Breast epithelium (tissue), 4 donors: ENCODE measurements at regions of chr3 and their contacts with region 1.

Region 1: DNA sequence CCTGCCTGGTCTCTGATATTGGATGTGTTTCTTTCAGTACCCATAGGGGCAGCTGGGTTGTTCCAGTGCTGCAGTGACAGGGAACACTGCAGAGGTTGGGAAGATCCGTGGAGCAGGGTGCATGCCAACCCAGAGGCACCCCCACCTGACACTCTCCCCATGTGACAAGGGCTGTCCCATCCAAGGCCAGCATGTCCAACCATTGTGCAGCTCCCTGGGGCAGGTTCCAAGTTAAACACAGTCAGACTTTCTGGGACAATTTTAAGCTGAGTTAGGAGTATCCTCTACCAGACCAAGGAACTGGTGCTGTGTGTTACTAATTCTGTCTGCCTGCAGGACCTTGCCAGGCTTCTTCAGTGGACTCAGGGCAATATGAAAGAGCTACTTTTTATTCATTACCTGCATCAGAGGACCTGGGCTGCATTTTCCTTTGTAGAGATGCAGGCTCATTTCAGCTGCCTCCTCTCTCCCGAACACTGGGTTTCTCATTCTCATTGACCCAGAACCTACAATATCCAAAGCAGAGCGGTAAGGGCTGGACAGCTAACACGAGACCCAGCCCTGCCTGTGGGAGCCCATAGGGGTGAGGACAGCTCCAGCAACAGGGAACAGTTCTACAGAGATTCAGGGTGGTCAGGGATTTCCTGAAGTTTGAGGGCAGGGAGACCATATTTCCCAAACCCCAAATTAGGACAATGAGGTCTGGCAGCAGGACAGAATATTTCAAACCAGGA is 72.7 kb downstream of the SPSB4 start:
- DNase-seq: no peak
- H3K4me3 ChIP-seq: no peak overlapping the region
- H3K27ac ChIP-seq: no peak overlapping the region
- H3K4me1 ChIP-seq: no peaks in the 10 kb centered on the region
- H3K27me3 ChIP-seq: no peaks in the 10 kb centered on the region
- CTCF ChIP-seq: no peak
- POLR2A ChIP-seq: no peak

Region 2: GRCh38 chr3:141063831-141064230 is 60.0 kb before region 1 on chr3:
- intact Hi-C with region 1: loop called (anchors 1 kb)
- DNase-seq: no peak
- H3K4me3 ChIP-seq: no peak overlapping the region
- H3K27ac ChIP-seq: no peak overlapping the region
- H3K4me1 ChIP-seq: no peaks in the 10 kb centered on the region
- H3K27me3 ChIP-seq: no peaks in the 10 kb centered on the region
- CTCF ChIP-seq: no peak
- POLR2A ChIP-seq: no peak